OCI-LY7 (cell line): ENCODE measurements at regions of chr17 and their contacts with region 1.

Region 1: GRCh38 chr17:17783116-17783824 is 53.5 kb downstream of the SREBF1 start:
- DNase-seq: peak; percentile 93
- H3K4me3 ChIP-seq: peak overlapping the region; percentile 68
- H3K27ac ChIP-seq: peak overlapping the region; percentile 99
- H3K4me1 ChIP-seq: peaks cover 54% of the 10 kb centered on the region
- CTCF ChIP-seq: peak; percentile 66

Region 2: GRCh38 chr17:17694169-17695081 is 88.8 kb before region 1 on chr17:
- CTCF ChIA-PET with region 1: no interaction called
- POLR2A ChIA-PET with region 1: interaction called, 4 read pairs
- intact Hi-C with region 1: loop called (anchors 1 kb)
- DNase-seq: peak; percentile 73
- H3K4me3 ChIP-seq: peak overlapping the region; percentile 79
- H3K27ac ChIP-seq: peak overlapping the region; percentile 74
- H3K4me1 ChIP-seq: peaks cover 84% of the 10 kb centered on the region
- CTCF ChIP-seq: no peak

Region 3: DNA sequence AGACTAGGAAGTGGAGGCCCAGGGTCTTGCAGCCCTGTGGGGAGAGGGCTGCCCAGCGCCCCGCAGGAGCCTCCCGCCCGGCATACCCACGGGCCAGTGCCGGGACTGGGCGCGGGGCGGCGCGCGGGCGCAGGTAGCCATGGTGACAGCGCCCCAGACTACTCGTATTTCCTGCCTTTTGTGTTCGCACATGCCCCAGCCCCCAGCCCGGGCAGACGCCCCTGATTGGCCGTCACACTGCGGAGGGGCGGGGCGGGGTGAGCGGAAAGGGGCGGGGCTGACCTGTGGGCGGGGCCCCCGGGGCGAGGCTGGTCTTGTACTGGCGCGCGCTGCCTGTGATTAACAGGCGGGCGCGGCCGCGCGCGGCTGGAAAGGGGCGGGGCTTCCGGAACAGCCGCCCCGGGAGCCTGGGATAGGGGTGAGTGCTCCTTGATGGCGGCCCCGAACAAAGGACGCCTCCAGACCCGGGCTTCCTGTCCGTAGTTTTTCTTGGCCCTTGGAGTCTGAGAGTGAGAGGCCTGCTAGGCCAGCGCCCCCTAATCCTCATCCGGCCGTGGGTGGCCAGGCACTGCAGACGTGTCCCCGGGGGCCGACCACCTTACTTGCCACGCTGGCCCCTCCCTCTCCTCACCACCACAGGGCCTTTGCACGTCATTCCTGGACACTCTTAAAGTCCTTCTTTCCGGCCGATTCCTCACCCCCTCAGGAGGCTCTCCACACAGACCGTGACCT is 31.0 kb before region 1 on chr17:
- CTCF ChIA-PET with region 1: no interaction called
- POLR2A ChIA-PET with region 1: no interaction called
- intact Hi-C with region 1: loop called (anchors 1 kb)
- DNase-seq: peak; percentile 96
- H3K4me3 ChIP-seq: peak overlapping the region; percentile 74
- H3K27ac ChIP-seq: peak overlapping the region; percentile 98
- H3K4me1 ChIP-seq: peaks cover 88% of the 10 kb centered on the region
- CTCF ChIP-seq: peak; percentile 70

Region 4: GRCh38 chr17:17757391-17757791 is 25.9 kb before region 1 on chr17:
- CTCF ChIA-PET with region 1: no interaction called
- POLR2A ChIA-PET with region 1: interaction called, 3 read pairs
- intact Hi-C with region 1: loop called (anchors 1 kb)
- DNase-seq: peak; percentile 91
- H3K4me3 ChIP-seq: peak overlapping the region; percentile 61
- H3K27ac ChIP-seq: peak overlapping the region; percentile 98
- H3K4me1 ChIP-seq: peaks cover 100% of the 10 kb centered on the region
- CTCF ChIP-seq: no peak

Region 5: DNA sequence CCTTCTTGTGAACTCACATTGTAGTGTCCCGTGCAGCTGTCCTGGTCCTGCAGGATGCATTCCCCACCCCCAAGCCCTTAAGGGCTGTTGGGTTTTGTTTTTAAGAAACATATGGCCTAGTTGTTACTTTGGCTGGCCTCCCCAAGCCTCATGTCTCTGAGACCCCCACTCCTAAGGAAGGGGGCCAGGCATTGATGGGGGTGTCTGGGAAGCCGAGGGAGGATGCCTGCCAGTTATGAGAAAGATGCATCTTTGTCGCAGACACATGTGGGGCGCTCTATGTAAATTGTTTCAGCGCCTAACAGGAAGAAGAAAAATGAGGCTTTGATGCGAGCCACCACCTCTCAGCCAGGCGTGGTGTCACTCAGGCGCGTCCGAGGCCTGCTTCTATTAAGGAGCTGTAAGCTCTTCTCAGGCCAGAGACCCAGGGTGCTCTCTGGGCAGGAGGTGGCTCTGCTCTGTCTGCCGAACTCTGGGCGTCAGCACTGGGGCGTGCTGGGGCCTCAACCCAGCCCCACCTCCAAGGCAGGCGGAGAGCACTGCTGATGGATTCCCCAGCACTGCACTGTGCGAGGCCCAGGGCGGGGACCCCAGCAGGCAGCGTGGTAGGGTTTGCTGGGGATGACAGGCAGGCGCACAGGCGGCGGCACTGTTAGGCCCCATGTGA is 17.1 kb before region 1 on chr17:
- CTCF ChIA-PET with region 1: interaction called, 4 read pairs
- POLR2A ChIA-PET with region 1: interaction called, 7 read pairs
- intact Hi-C with region 1: loop called (anchors 1 kb)
- DNase-seq: peak; percentile 96
- H3K4me3 ChIP-seq: peak overlapping the region; percentile 67
- H3K27ac ChIP-seq: peak overlapping the region; percentile 97
- H3K4me1 ChIP-seq: peaks cover 81% of the 10 kb centered on the region
- CTCF ChIP-seq: peak; percentile 45; the same call in 1 of the 2 replicates

Region 6: GRCh38 chr17:17859909-17860765 is 76.9 kb after region 1 on chr17:
- CTCF ChIA-PET with region 1: no interaction called
- POLR2A ChIA-PET with region 1: interaction called, 6 read pairs
- intact Hi-C with region 1: loop called (anchors 1 kb)
- DNase-seq: peak; percentile 73
- H3K4me3 ChIP-seq: no peak overlapping the region
- H3K27ac ChIP-seq: no peak overlapping the region
- H3K4me1 ChIP-seq: no peaks in the 10 kb centered on the region
- CTCF ChIP-seq: peak; percentile 98